T-cell (primary cell): ENCODE measurements at regions of chrX and their contacts with region 1.

Region 1: GRCh38 chrX:13087322-13088155 is 43.1 kb upstream of the FAM9C start:
- DNase-seq: peak in 34 of 35 experiments; percentile 30 to 91 (median 64)
- ATAC-seq: peak; percentile 69 to 81 (median 75)
- H3K4me3 ChIP-seq: peak overlapping the region in 1 of 2 donors; percentile 19
- H3K4me3 Mint-ChIP-seq: peak overlapping the region; percentile 77 to 85 (median 80)
- H3K27ac ChIP-seq: peak overlapping the region; percentile 100
- H3K27ac Mint-ChIP-seq: peak overlapping the region; percentile 89 to 99
- H3K4me1 ChIP-seq: peaks cover 49 to 74% of the 10 kb centered on the region in 2 experiments
- H3K4me1 Mint-ChIP-seq: peaks cover 92 to 95% (median 94%) of the 10 kb centered on the region in 3 donors
- H3K27me3 ChIP-seq: no peaks in the 10 kb centered on the region
- H3K27me3 Mint-ChIP-seq: peaks cover 0 to 4% of the 10 kb centered on the region in 2 donors

Region 2: GRCh38 chrX:12701628-12702027 is 385.9 kb before region 1 on chrX:
- CTCF ChIA-PET with region 1: no interaction called
- POLR2A ChIA-PET with region 1: no interaction called
- DNase-seq: peak in 6 of 35 experiments; percentile 0 to 25 (median 2)
- ATAC-seq: no peak
- H3K4me3 ChIP-seq: no peak overlapping the region
- H3K4me3 Mint-ChIP-seq: no peak overlapping the region
- H3K27ac ChIP-seq: no peak overlapping the region
- H3K27ac Mint-ChIP-seq: no peak overlapping the region
- H3K4me1 ChIP-seq: no peaks in the 10 kb centered on the region
- H3K4me1 Mint-ChIP-seq: no peaks in the 10 kb centered on the region
- H3K27me3 ChIP-seq: peaks cover 0 to 2% of the 10 kb centered on the region in 2 experiments
- H3K27me3 Mint-ChIP-seq: peaks cover 8 to 44% of the 10 kb centered on the region in 2 donors

Region 3: GRCh38 chrX:12955882-12956703 is 131.4 kb before region 1 on chrX:
- CTCF ChIA-PET with region 1: interaction called, 3 to 27 read pairs
- POLR2A ChIA-PET with region 1: interaction called, 5 read pairs
- DNase-seq: peak in 14 of 35 experiments; percentile 13 to 73 (median 51)
- ATAC-seq: peak; percentile 20 to 36 (median 30)
- H3K4me3 ChIP-seq: peak overlapping the region; percentile 43 to 56
- H3K4me3 Mint-ChIP-seq: peak overlapping the region; percentile 78 to 82 (median 78)
- H3K27ac ChIP-seq: peak overlapping the region; percentile 94
- H3K27ac Mint-ChIP-seq: peak overlapping the region; percentile 96 to 99
- H3K4me1 ChIP-seq: peaks cover 66 to 83% of the 10 kb centered on the region in 2 experiments
- H3K4me1 Mint-ChIP-seq: peaks cover 80 to 90% (median 84%) of the 10 kb centered on the region in 3 donors
- H3K27me3 ChIP-seq: no peaks in the 10 kb centered on the region
- H3K27me3 Mint-ChIP-seq: no peaks in the 10 kb centered on the region

Region 4: GRCh38 chrX:13005661-13006473 is 81.7 kb before region 1 on chrX:
- CTCF ChIA-PET with region 1: interaction called, 9 to 10 read pairs
- POLR2A ChIA-PET with region 1: interaction called, 3 to 4 read pairs
- DNase-seq: peak in 12 of 35 experiments; percentile 4 to 59 (median 14)
- ATAC-seq: peak; percentile 56 to 79 (median 64)
- H3K4me3 ChIP-seq: no peak overlapping the region
- H3K4me3 Mint-ChIP-seq: peak overlapping the region; percentile 59 to 78 (median 70)
- H3K27ac ChIP-seq: peak overlapping the region; percentile 70
- H3K27ac Mint-ChIP-seq: peak overlapping the region; percentile 100
- H3K4me1 ChIP-seq: peaks cover 33 to 53% of the 10 kb centered on the region in 2 experiments
- H3K4me1 Mint-ChIP-seq: peaks cover 54 to 79% (median 66%) of the 10 kb centered on the region in 3 donors
- H3K27me3 ChIP-seq: no peaks in the 10 kb centered on the region
- H3K27me3 Mint-ChIP-seq: peaks cover 0 to 11% of the 10 kb centered on the region in 2 donors

Region 5: DNA sequence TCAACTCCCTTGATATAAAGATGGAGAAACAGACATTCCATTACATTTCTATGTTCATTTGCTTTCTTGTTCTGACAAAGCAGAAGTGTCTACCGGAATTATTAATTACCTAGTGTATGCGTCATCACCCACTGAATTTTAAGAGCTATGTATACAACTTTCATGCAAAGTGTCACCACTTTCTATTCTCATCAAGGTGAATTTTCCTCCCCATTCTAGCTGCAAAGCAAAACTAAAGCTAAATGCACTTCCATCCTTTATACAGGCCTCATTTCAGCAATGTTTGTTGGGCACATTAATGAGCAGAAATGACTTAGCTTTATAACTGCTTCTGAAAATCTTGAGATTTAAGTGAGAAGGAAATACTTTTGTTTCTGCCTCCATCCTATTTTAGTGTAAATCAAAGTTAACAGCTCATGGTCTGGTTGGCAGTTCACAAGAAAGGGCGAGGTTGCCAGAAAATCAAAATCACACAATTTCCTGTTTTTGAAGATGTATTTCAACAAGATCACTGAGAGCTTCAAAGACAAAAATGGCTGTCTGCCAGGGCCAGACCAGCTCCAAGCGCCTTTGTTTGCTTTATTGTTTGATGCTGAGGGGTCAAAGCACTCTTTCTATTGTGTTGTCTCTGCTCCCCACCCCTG is 35.9 kb before region 1 on chrX:
- CTCF ChIA-PET with region 1: interaction called, 3 to 11 read pairs
- POLR2A ChIA-PET with region 1: interaction called, 6 to 7 read pairs
- DNase-seq: peak in 32 of 35 experiments; percentile 18 to 74 (median 43)
- ATAC-seq: peak; percentile 76 to 90 (median 86)
- H3K4me3 ChIP-seq: no peak overlapping the region
- H3K4me3 Mint-ChIP-seq: peak overlapping the region; percentile 3 to 60 (median 50)
- H3K27ac ChIP-seq: peak overlapping the region; percentile 91
- H3K27ac Mint-ChIP-seq: peak overlapping the region; percentile 87 to 98
- H3K4me1 ChIP-seq: peaks cover 27 to 55% of the 10 kb centered on the region in 2 experiments
- H3K4me1 Mint-ChIP-seq: peaks cover 79 to 86% (median 82%) of the 10 kb centered on the region in 3 donors
- H3K27me3 ChIP-seq: no peaks in the 10 kb centered on the region
- H3K27me3 Mint-ChIP-seq: peaks cover 0 to 12% of the 10 kb centered on the region in 2 donors

Region 6: GRCh38 chrX:13064599-13065143 is 22.9 kb before region 1 on chrX:
- CTCF ChIA-PET with region 1: interaction called in 1 of 2 experiments, 3 read pairs
- POLR2A ChIA-PET with region 1: interaction called, 3 to 11 read pairs
- DNase-seq: no peak
- ATAC-seq: no peak
- H3K4me3 ChIP-seq: no peak overlapping the region
- H3K4me3 Mint-ChIP-seq: no peak overlapping the region
- H3K27ac ChIP-seq: no peak overlapping the region
- H3K27ac Mint-ChIP-seq: peak overlapping the region in 1 of 2 donors; percentile 28
- H3K4me1 ChIP-seq: peaks cover 2 to 17% of the 10 kb centered on the region in 2 experiments
- H3K4me1 Mint-ChIP-seq: peaks cover 32 to 49% (median 39%) of the 10 kb centered on the region in 3 donors
- H3K27me3 ChIP-seq: no peaks in the 10 kb centered on the region
- H3K27me3 Mint-ChIP-seq: peaks cover 0 to 14% of the 10 kb centered on the region in 2 donors

Region 7: GRCh38 chrX:13235930-13236329 is 148.4 kb after region 1 on chrX:
- CTCF ChIA-PET with region 1: no interaction called
- POLR2A ChIA-PET with region 1: no interaction called
- DNase-seq: no peak
- ATAC-seq: no peak
- H3K4me3 ChIP-seq: no peak overlapping the region
- H3K4me3 Mint-ChIP-seq: no peak overlapping the region
- H3K27ac ChIP-seq: no peak overlapping the region
- H3K27ac Mint-ChIP-seq: no peak overlapping the region
- H3K4me1 ChIP-seq: no peaks in the 10 kb centered on the region
- H3K4me1 Mint-ChIP-seq: no peaks in the 10 kb centered on the region
- H3K27me3 ChIP-seq: no peaks in the 10 kb centered on the region
- H3K27me3 Mint-ChIP-seq: peaks cover 0 to 36% of the 10 kb centered on the region in 2 donors

Region 8: GRCh38 chrX:13487731-13488523 is 400.4 kb after region 1 on chrX:
- CTCF ChIA-PET with region 1: interaction called, 4 to 19 read pairs
- POLR2A ChIA-PET with region 1: no interaction called
- DNase-seq: peak in 30 of 35 experiments; percentile 3 to 75 (median 28)
- ATAC-seq: peak; percentile 58 to 84 (median 66)
- H3K4me3 ChIP-seq: no peak overlapping the region
- H3K4me3 Mint-ChIP-seq: no peak overlapping the region
- H3K27ac ChIP-seq: peak overlapping the region; percentile 57
- H3K27ac Mint-ChIP-seq: peak overlapping the region; percentile 77 to 84
- H3K4me1 ChIP-seq: peaks cover 5 to 25% of the 10 kb centered on the region in 2 experiments
- H3K4me1 Mint-ChIP-seq: peaks cover 19 to 46% (median 28%) of the 10 kb centered on the region in 3 donors
- H3K27me3 ChIP-seq: no peaks in the 10 kb centered on the region
- H3K27me3 Mint-ChIP-seq: peaks cover 0 to 29% of the 10 kb centered on the region in 2 donors